Activated CD8-positive, alpha-beta T cell treated with anti-CD3 and anti-CD28 coated beads, Interleukin-2, amount 10 ng/mL, durations not matched to agents 7 days and 5 days (primary cell): ENCODE measurements at regions of chr16 and their contacts with region 1.

Region 1: GRCh38 chr16:30984669-30985400 is at the start of gene HSD3B7:
- DNase-seq: peak; percentile 85
- ATAC-seq: peak; percentile 80
- H3K4me3 Mint-ChIP-seq: peak within 1 kb of the TSS; percentile 52
- H3K27ac Mint-ChIP-seq: peak within 1 kb of the TSS; percentile 43
- H3K4me1 Mint-ChIP-seq: peaks cover 15% of the 10 kb centered on the region
- H3K27me3 Mint-ChIP-seq: no peaks in the 10 kb centered on the region
- total RNA-seq, gene HSD3B7: 6.3 to 7.8 TPM

Region 2: DNA sequence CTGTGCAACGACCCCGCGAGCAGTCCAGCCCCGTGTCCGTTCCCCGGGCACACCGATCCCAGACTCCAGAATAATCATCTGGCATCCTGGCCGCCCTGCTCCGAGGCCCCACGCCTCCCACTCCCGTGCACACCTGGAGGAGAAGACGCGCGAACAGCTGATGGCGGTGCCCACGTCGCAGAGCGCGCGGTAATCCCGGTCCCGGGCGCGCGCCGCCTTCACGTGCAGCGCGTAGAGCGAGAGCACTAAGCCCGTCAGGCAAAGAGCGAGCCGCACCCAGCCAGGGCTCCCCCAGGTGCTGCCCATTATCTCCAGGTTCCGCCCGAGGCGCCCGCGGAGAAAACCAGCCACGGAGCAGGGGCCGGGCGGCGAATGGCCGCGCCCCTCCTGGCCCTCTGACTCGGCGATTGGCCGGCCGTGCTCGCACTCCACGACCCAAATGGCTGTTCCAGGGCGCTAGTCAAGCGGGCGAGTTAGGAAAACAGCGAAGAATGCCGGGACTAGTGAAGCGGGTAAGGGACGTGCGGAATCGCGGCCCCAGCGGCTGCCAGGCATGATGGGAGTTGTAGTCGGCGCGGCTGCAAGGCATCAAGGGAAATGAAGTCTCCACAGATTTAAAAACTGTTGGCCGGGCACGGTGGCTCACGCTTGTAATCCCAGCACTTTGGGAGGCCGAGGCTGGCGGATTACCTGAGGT is 109.7 kb after region 1 on chr16 and contains the start of gene VKORC1:
- CTCF ChIA-PET with region 1: interaction called, 21 read pairs
- POLR2A ChIA-PET with region 1: no interaction called
- DNase-seq: peak; percentile 93
- ATAC-seq: peak; percentile 95
- H3K4me3 Mint-ChIP-seq: peak within 1 kb of the TSS; percentile 95
- H3K27ac Mint-ChIP-seq: peak within 1 kb of the TSS; percentile 94
- H3K4me1 Mint-ChIP-seq: peaks cover 34% of the 10 kb centered on the region
- H3K27me3 Mint-ChIP-seq: peaks cover 3% of the 10 kb centered on the region
- total RNA-seq, gene VKORC1: 71.6 to 78.8 TPM

Region 3: DNA sequence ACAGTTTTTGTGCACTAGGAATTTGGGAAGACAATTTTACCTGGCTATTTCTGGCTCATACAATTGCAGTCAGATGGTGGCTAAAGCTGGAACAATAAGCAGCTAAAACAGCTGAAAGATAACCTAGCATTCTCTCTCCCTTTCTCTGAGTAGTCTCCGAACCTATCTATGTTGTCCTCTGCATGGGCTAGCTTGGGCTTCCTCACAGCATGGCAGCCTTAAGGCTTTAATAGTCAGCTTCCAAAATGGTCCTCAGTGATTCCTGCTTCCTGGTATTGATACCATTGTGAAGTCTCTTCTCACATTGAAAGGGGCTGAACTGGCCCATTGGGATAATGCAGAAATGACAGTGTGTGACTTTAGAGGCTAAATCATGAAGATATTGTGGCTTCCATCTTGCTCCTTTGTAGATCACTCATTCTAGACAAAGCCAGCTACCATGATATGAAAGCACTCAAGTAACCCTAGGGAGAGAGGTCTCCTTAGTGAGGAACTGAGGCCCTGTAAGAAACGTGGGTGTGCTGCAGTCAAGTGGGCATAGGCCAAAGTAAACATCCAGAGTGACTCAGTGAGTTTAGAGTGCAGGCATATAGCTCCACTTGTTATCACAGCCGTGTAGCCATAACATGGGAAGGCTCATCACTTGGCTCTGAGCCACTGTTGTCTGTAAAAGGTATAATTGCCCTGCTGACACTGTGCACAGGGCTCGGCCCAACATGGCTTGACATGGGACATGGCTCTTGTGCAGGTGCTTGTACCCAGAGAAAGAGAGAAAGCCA is 115.2 kb after region 1 on chr16:
- CTCF ChIA-PET with region 1: interaction called, 21 read pairs
- POLR2A ChIA-PET with region 1: no interaction called
- DNase-seq: no peak
- ATAC-seq: no peak
- H3K4me3 Mint-ChIP-seq: no peak overlapping the region
- H3K27ac Mint-ChIP-seq: no peak overlapping the region
- H3K4me1 Mint-ChIP-seq: peaks cover 10% of the 10 kb centered on the region
- H3K27me3 Mint-ChIP-seq: peaks cover 3% of the 10 kb centered on the region